Activated naive CD4-positive, alpha-beta T cell treated with anti-CD3 and anti-CD28 coated beads for 36 hours (primary cell): ENCODE measurements at regions of chr7 and their contacts with region 1.

Region 1: GRCh38 chr7:77696198-77697028 is at the start of gene RSBN1L:
- DNase-seq: peak; percentile 98
- H3K4me3 Mint-ChIP-seq: peak within 1 kb of the TSS; percentile 97
- H3K27ac Mint-ChIP-seq: peak within 1 kb of the TSS; percentile 96
- H3K4me1 Mint-ChIP-seq: peaks cover 44% of the 10 kb centered on the region
- H3K27me3 Mint-ChIP-seq: no peaks in the 10 kb centered on the region
- total RNA-seq, gene RSBN1L: 15.7 to 16.9 TPM

Region 2: GRCh38 chr7:77738871-77739270 is 42.5 kb after region 1 on chr7:
- CTCF ChIA-PET with region 1: interaction called, 6 read pairs
- intact Hi-C with region 1: loop called (anchors 5 kb)
- DNase-seq: no peak
- H3K4me3 Mint-ChIP-seq: no peak overlapping the region
- H3K27ac Mint-ChIP-seq: no peak overlapping the region
- H3K4me1 Mint-ChIP-seq: peaks cover 10% of the 10 kb centered on the region
- H3K27me3 Mint-ChIP-seq: no peaks in the 10 kb centered on the region

Region 3: DNA sequence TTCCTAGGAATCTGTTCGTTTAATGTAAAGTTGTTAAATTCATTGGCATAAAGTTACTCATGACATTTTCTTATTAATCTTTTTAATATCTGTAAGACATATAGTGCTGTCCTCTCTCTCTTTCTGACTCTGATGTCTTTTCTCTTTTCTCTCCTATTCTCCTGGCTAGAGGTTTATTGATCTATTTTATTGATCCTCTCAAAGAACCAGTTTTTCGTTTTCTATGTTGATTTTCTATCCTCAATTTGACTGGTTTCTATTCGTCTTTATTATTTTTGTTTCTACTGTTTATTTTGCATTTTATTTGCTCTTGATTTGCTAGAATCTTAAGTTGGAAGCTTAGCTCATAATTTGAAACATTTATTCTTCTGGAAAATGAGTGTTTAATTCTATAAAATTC is 108.7 kb after region 1 on chr7:
- CTCF ChIA-PET with region 1: no interaction called
- intact Hi-C with region 1: no loop called
- DNase-seq: no peak
- H3K4me3 Mint-ChIP-seq: no peak overlapping the region
- H3K27ac Mint-ChIP-seq: no peak overlapping the region
- H3K4me1 Mint-ChIP-seq: peaks cover 60% of the 10 kb centered on the region
- H3K27me3 Mint-ChIP-seq: no peaks in the 10 kb centered on the region